Activated naive CD4-positive, alpha-beta T cell treated with anti-CD3 and anti-CD28 coated beads for 36 hours (primary cell): ENCODE measurements at regions of chr6 and their contacts with region 1.

Region 1: GRCh38 chr6:14876778-14877613 is 368.9 kb upstream of the JARID2 start:
- DNase-seq: peak; percentile 64
- H3K4me3 Mint-ChIP-seq: peak overlapping the region; percentile 7
- H3K27ac Mint-ChIP-seq: peak overlapping the region; percentile 84
- H3K4me1 Mint-ChIP-seq: peaks cover 68% of the 10 kb centered on the region
- H3K27me3 Mint-ChIP-seq: no peaks in the 10 kb centered on the region

Region 2: GRCh38 chr6:14423955-14424354 is 453.0 kb before region 1 on chr6:
- CTCF ChIA-PET with region 1: no interaction called
- intact Hi-C with region 1: loop called (anchors 1 kb)
- DNase-seq: no peak
- H3K4me3 Mint-ChIP-seq: no peak overlapping the region
- H3K27ac Mint-ChIP-seq: peak overlapping the region; percentile 57
- H3K4me1 Mint-ChIP-seq: peaks cover 23% of the 10 kb centered on the region
- H3K27me3 Mint-ChIP-seq: no peaks in the 10 kb centered on the region

Region 3: GRCh38 chr6:14674458-14674857 is 202.5 kb before region 1 on chr6:
- CTCF ChIA-PET with region 1: no interaction called
- intact Hi-C with region 1: loop called (anchors 1 kb)
- DNase-seq: peak; percentile 12
- H3K4me3 Mint-ChIP-seq: no peak overlapping the region
- H3K27ac Mint-ChIP-seq: peak overlapping the region; percentile 80
- H3K4me1 Mint-ChIP-seq: peaks cover 19% of the 10 kb centered on the region
- H3K27me3 Mint-ChIP-seq: no peaks in the 10 kb centered on the region

Region 4: DNA sequence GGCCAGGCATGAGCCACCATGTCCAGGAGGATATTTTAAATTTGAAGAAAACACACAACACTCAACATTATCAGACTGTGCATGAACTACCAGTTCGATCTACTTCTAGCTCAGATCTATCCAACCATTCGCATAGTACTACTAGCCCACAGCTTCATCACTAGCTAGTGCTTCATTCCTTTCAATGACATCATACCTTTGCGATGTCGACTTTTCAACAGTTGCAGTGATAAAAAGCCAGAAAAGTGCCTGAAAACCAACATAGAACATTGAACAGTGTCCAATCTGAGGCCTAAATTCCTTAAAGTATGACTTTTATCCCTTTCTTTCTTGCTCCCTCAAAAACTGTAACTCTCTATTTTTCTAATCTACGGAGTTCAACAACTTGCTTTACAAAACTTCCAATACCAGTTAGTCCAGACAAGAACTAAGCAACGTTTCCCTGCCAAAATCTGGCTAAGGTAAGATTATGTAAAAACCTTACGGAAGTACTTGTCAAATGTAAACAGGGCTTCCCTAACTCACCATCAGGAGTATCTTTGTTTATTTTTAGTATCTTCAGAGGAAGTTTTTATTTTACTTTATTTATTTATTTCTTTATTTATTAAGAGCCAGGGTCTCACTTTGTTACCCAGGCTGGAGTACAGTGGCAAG is 65.1 kb before region 1 on chr6:
- CTCF ChIA-PET with region 1: no interaction called
- intact Hi-C with region 1: no loop called
- DNase-seq: no peak
- H3K4me3 Mint-ChIP-seq: no peak overlapping the region
- H3K27ac Mint-ChIP-seq: no peak overlapping the region
- H3K4me1 Mint-ChIP-seq: no peaks in the 10 kb centered on the region
- H3K27me3 Mint-ChIP-seq: no peaks in the 10 kb centered on the region

Region 5: GRCh38 chr6:14857501-14857900 is 19.5 kb before region 1 on chr6:
- CTCF ChIA-PET with region 1: interaction called, 6 read pairs
- intact Hi-C with region 1: loop called (anchors 1 kb)
- DNase-seq: peak; percentile 79
- H3K4me3 Mint-ChIP-seq: peak overlapping the region; percentile 36
- H3K27ac Mint-ChIP-seq: peak overlapping the region; percentile 91
- H3K4me1 Mint-ChIP-seq: peaks cover 28% of the 10 kb centered on the region
- H3K27me3 Mint-ChIP-seq: no peaks in the 10 kb centered on the region

Region 6: DNA sequence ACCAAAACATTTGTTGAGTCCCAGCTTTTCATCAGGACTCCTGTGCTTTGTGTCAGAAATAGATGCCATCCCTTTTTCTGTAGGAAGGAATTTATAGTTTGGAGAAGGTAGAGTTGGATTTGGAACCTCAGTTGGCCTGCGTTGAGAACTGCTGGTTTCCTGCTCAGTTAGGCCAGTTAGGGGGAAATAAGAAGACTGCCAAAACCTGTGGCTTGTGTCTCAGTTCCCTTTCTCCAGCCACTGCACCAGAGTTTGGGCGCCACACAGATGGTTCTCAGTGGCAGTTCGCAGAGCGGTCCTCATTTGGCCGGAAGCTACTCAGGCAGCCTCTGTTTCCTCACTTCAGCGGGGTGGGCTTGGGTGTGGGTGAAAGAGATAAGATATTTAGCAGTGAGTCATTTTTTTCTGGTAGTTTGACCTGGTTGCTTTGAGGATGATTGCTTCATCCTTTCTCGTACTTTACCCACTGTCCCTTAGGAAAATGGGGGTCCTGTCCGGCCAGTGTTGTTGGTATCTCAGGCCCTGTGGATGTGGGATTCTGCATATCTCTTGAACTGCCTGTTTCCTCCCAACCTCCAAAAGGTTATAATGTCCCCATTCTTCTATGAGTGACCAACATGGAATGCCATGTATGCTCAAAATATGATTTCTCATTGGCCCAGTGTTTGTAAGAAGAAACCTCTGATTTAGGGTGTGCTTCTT is 422.6 kb after region 1 on chr6:
- CTCF ChIA-PET with region 1: interaction called, 3 read pairs
- intact Hi-C with region 1: loop called (anchors 5 kb)
- DNase-seq: peak; percentile 36
- H3K4me3 Mint-ChIP-seq: no peak overlapping the region
- H3K27ac Mint-ChIP-seq: no peak overlapping the region
- H3K4me1 Mint-ChIP-seq: peaks cover 82% of the 10 kb centered on the region
- H3K27me3 Mint-ChIP-seq: no peaks in the 10 kb centered on the region

Region 7: DNA sequence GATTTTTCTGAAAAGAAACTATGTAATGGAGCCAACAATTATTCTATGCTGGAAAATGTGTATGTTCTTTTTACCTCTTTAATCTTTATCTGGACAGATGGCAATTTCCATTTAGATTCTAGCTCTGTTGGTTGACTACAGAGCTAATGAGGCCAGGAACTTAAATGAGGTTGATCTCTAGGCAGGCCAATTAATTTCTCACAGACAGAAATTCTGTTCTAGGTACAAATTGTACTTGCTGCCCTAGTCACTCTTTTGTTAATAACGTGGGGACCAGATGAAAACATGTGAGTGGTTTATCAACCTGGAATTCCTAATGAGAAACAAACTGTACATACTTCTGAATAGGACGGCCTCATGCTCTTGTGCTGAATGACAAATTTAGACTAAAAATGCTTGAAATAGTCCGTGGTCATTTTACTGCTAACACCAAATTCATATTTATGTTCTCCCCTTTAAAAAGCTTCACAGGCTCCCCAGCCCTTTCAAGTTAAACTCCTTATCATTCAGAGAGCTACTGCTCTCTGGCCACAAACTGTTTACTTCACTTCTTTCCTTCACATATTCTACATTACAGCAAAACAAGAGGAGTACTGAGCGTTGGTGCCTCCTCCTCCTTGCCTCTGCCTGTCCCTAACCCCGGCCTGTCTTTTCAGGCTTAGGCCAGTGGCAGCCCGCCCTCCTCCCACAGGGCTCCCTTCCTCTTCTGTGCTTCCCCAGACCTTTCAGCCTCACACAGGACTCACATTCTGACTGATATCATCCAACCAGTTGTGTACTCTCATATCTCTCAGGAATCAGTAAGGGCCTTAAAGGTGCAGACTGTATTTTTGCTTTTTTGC is 744.4 kb after region 1 on chr6:
- CTCF ChIA-PET with region 1: no interaction called
- intact Hi-C with region 1: loop called (anchors 10 kb)
- DNase-seq: no peak
- H3K4me3 Mint-ChIP-seq: no peak overlapping the region
- H3K27ac Mint-ChIP-seq: no peak overlapping the region
- H3K4me1 Mint-ChIP-seq: peaks cover 24% of the 10 kb centered on the region
- H3K27me3 Mint-ChIP-seq: no peaks in the 10 kb centered on the region